AG04449 (cell line): ENCODE measurements at regions of chr11 and their contacts with region 1.

Region 1: GRCh38 chr11:118907051-118908042 is 18.4 kb downstream of the BCL9L start:
- DNase-seq: no peak
- H3K4me3 ChIP-seq: peak overlapping the region; percentile 46
- CTCF ChIP-seq: peak; percentile 89

Region 2: GRCh38 chr11:118634431-118635236 is 272.7 kb before region 1 on chr11:
- CTCF ChIA-PET with region 1: no interaction called
- POLR2A ChIA-PET with region 1: no interaction called
- DNase-seq: no peak
- H3K4me3 ChIP-seq: no peak overlapping the region
- CTCF ChIP-seq: no peak

Region 3: GRCh38 chr11:118791111-118791965 is 116.0 kb before region 1 on chr11 and contains the start of gene DDX6:
- CTCF ChIA-PET with region 1: interaction called, 7 read pairs
- POLR2A ChIA-PET with region 1: interaction called, 49 read pairs
- DNase-seq: no peak
- H3K4me3 ChIP-seq: peak within 1 kb of the TSS; percentile 82
- CTCF ChIP-seq: peak; percentile 67

Region 4: DNA sequence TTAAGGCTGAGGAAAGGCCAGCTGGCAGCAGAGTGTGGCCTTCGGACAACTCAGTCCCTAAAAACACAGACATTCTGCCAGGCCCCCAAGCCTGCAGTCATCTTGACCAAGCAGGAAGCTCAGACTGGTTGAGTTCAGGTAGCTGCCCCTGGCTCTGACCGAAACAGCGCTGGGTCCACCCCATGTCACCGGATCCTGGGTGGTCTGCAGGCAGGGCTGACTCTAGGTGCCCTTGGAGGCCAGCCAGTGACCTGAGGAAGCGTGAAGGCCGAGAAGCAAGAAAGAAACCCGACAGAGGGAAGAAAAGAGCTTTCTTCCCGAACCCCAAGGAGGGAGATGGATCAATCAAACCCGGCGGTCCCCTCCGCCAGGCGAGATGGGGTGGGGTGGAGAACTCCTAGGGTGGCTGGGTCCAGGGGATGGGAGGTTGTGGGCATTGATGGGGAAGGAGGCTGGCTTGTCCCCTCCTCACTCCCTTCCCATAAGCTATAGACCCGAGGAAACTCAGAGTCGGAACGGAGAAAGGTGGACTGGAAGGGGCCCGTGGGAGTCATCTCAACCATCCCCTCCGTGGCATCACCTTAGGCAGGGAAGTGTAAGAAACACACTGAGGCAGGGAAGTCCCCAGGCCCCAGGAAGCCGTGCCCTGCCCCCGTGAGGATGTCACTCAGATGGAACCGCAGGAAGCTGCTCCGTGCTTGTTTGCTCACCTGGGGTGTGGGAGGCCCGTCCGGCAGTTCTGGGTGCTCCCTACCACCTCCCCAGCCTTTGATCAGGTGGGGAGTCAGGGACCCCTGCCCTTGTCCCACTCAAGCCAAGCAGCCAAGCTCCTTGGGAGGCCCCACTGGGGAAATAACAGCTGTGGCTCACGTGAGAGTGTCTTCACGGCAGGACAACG is 12.0 kb before region 1 on chr11:
- CTCF ChIA-PET with region 1: interaction called, 10 read pairs
- POLR2A ChIA-PET with region 1: interaction called, 10 read pairs
- DNase-seq: no peak
- H3K4me3 ChIP-seq: no peak overlapping the region
- CTCF ChIP-seq: no peak

Region 5: GRCh38 chr11:119166368-119167076 is 259.2 kb after region 1 on chr11:
- CTCF ChIA-PET with region 1: no interaction called
- POLR2A ChIA-PET with region 1: no interaction called
- DNase-seq: no peak
- H3K4me3 ChIP-seq: no peak overlapping the region
- CTCF ChIP-seq: no peak